ENCODE measurements at regions of chr3 and their contacts with region 1.

Region 1: DNA sequence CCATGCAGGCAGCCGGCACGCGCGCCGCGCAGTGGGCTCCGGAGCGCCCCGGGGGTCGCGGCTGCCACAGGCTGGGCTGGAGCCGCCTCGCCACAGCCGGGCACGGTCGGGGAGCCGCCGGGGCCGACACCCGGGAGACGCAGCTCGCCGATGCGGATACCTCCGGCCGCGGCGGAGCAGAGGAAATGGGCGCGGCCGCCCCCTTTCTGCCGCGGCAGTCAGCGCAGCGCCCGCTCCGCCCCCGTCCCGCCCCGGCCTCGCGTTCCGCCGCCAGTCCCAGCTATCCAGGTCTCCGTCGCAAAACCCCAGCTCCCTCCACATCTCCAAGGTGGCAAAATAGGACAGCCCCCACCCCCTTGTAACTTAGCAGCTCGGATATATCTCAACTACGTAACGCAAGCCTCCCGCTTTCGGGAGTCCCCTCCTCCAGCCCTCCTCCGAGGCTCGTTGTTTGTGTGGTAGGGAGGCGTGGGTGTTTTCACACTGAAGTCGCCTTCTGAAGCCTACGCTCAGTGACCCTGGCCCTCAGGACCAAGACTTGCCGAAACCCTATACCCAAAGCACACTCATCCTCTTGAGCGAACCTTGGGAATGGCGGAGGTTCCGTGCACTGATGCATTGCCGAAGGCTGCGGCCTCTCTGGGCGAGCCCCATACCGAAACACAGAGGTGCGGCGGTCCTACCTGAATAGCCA is at the start of gene SH3BP5:
- DNase-seq: peak; percentile 55 to 81
- ATAC-seq: peak; percentile 94
- total RNA-seq, gene SH3BP5: 7.6 to 12.1 TPM

Region 2: GRCh38 chr3:15268033-15268631 is 64.4 kb before region 1 on chr3:
- intact Hi-C with region 1: loop called in 1 of 2 experiments (anchors 5 kb)
- DNase-seq: peak; percentile 76 to 92
- ATAC-seq: peak; percentile 82

Region 3: GRCh38 chr3:15284121-15284889 is 48.2 kb before region 1 on chr3:
- intact Hi-C with region 1: loop called in 1 of 2 experiments (anchors 10 kb)
- DNase-seq: peak in 1 of 2 donors; percentile 41
- ATAC-seq: peak; percentile 69

Region 4: GRCh38 chr3:15743587-15744009 is 411.0 kb after region 1 on chr3:
- intact Hi-C with region 1: no loop called
- DNase-seq: no peak
- ATAC-seq: no peak

Measured in left colon (tissue), 2 donors.